Vagina (tissue), 2 donors: ENCODE measurements at regions of chr3 and their contacts with region 1.

Region 1: GRCh38 chr3:11060500-11061251 is 68.1 kb downstream of the SLC6A1 start:
- DNase-seq: no peak
- H3K4me3 ChIP-seq: peak overlapping the region; percentile 1 to 5
- H3K27ac ChIP-seq: no peak overlapping the region
- H3K4me1 ChIP-seq: peaks cover 4% of the 10 kb centered on the region
- H3K27me3 ChIP-seq: no peaks in the 10 kb centered on the region
- CTCF ChIP-seq: peak; percentile 85 to 96 (median 87)
- POLR2A ChIP-seq: no peak

Region 2: GRCh38 chr3:10950476-10951294 is 110.0 kb before region 1 on chr3:
- intact Hi-C with region 1: loop called (anchors 2 kb)
- DNase-seq: no peak
- H3K4me3 ChIP-seq: no peak overlapping the region
- H3K27ac ChIP-seq: no peak overlapping the region
- H3K4me1 ChIP-seq: no peaks in the 10 kb centered on the region
- H3K27me3 ChIP-seq: no peaks in the 10 kb centered on the region
- CTCF ChIP-seq: peak in 1 of 3 experiments; percentile 48
- POLR2A ChIP-seq: no peak

Region 3: GRCh38 chr3:11236595-11237461 is 176.2 kb after region 1 on chr3:
- intact Hi-C with region 1: no loop called
- DNase-seq: no peak
- H3K4me3 ChIP-seq: no peak overlapping the region
- H3K27ac ChIP-seq: peak overlapping the region; percentile 10
- H3K4me1 ChIP-seq: peaks cover 5% of the 10 kb centered on the region
- H3K27me3 ChIP-seq: no peaks in the 10 kb centered on the region
- CTCF ChIP-seq: peak; percentile 47 to 56 (median 48)
- POLR2A ChIP-seq: no peak

Region 4: GRCh38 chr3:11335056-11335608 is 274.5 kb after region 1 on chr3:
- intact Hi-C with region 1: loop called (anchors 5 kb)
- DNase-seq: no peak
- H3K4me3 ChIP-seq: no peak overlapping the region
- H3K27ac ChIP-seq: no peak overlapping the region
- H3K4me1 ChIP-seq: no peaks in the 10 kb centered on the region
- H3K27me3 ChIP-seq: no peaks in the 10 kb centered on the region
- CTCF ChIP-seq: peak; percentile 61 to 74 (median 67)
- POLR2A ChIP-seq: no peak

Region 5: DNA sequence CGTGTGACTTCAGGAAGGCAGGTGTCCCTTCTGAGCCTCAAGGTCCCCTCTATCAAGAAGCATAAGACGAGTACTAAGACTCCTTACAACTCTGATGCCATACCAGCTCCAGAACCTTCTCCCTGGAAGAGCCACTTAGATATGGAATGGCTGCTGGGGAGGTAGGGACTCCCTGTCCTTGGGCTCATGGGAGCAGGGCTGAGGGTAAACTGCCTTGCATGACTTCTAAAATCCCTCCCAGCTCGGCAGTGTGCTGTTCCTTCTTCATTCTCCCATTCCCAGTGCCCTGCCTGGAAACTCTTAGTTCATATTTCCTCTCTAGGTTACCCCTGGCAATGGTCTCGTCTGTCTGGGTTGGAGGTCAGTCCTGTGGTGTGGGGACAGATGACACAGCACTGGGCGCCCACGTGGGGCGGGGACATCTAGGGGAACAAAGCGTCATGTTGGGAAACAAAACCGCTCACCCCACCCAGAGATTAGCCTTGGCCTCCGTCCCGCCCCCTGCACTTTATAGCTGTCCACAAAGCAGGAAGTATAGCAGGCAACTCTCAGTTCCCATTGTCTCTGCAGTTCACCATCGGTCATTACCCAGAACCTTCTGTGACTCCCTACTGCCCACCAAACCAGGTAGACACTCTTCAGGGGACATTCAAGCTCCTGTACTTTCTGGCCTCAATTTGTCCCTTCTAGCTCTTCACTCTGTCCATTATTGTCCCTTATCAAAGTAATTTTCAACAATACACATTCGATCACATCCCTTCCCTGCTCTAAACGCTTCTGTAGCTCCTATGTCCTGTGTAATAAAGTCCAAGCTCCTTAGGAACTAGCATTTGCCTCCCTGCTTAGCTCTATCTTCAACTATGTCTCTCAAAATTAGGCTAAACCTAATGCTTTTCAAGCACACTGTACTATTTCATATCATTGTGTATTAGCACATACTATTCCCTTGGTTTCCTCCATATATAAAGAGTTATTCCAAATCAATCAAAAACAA is 1938.8 kb after region 1 on chr3:
- intact Hi-C with region 1: loop called (anchors 10 kb)
- DNase-seq: no peak
- H3K4me3 ChIP-seq: no peak overlapping the region
- H3K27ac ChIP-seq: no peak overlapping the region
- H3K4me1 ChIP-seq: peaks cover 14% of the 10 kb centered on the region
- H3K27me3 ChIP-seq: no peaks in the 10 kb centered on the region
- CTCF ChIP-seq: no peak
- POLR2A ChIP-seq: no peak